GM18951 (cell line): ENCODE measurements at regions of chr10 and their contacts with region 1.

Region 1: GRCh38 chr10:128035557-128035973 is 90.7 kb downstream of the MKI67 start:
- POLR2A ChIP-seq: no peak

Region 2: GRCh38 chr10:128069351-128070051 is 33.9 kb after region 1 on chr10:
- in situ Hi-C with region 1: loop called (anchors 5 kb)
- POLR2A ChIP-seq: no peak